Mammary epithelial cell (primary cell): ENCODE measurements at regions of chr17 and their contacts with region 1.

Region 1: GRCh38 chr17:17568749-17569195 is 22.7 kb downstream of the PEMT start:
- DNase-seq: peak; percentile 28
- H3K4me3 ChIP-seq: no peak overlapping the region
- H3K27ac ChIP-seq: no peak overlapping the region
- H3K4me1 ChIP-seq: no peaks in the 10 kb centered on the region
- H3K27me3 ChIP-seq: no peaks in the 10 kb centered on the region
- CTCF ChIP-seq: peak; percentile 75 to 92

Region 2: DNA sequence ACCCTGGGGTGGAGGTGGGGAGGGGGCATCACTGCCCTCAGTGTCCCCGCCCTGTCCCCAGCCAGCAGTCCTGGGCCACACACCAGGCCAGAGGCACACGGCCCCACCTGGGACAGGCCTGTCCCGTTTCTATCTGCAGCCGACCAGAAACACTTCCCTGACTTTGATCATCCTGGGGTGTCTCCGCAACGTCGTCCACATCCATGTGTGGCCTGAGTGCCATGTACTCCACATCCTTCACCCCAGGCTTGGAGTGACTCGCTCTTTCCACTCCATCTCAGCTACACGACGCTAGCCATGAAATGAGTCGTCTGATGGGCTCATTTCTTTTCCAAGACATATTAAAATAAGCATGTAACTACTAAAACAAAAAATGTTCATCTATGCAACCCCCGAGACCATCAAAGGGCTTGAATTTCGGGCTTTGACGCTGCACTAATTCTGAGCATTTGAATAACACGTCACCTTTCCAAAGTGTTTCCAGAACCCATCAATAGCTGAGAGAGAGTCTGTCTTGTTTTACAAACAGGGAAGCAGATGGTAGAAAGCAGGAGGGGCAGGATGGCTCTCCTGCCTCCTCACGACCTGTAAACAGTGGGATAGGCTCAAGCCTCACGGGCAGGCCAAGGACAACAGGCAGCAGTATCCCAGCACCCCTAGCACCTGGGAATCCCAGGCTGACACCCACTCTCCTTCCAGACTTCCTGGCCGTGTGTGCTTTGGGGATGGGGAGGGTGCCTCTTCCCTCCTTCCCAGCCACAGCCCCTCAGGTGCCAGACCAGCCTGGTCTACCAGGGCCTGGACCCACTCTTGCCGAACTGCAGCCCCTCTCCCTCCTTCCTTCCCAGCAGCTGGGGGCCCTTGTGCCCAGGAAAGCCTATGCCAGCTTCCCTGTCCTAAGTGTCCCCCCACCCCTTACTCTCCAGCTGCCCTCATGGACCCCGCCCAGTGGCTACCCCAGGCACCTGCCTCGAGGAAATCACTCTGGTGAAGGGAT is 52.5 kb before region 1 on chr17:
- CTCF ChIA-PET with region 1: no interaction called
- dilution Hi-C with region 1: no loop called
- in situ Hi-C with region 1: no loop called
- intact Hi-C with region 1: no loop called
- DNase-seq: peak; percentile 18
- H3K4me3 ChIP-seq: no peak overlapping the region
- H3K27ac ChIP-seq: no peak overlapping the region
- H3K4me1 ChIP-seq: peaks cover 11% of the 10 kb centered on the region
- H3K27me3 ChIP-seq: peaks cover 10% of the 10 kb centered on the region
- CTCF ChIP-seq: no peak

Region 3: DNA sequence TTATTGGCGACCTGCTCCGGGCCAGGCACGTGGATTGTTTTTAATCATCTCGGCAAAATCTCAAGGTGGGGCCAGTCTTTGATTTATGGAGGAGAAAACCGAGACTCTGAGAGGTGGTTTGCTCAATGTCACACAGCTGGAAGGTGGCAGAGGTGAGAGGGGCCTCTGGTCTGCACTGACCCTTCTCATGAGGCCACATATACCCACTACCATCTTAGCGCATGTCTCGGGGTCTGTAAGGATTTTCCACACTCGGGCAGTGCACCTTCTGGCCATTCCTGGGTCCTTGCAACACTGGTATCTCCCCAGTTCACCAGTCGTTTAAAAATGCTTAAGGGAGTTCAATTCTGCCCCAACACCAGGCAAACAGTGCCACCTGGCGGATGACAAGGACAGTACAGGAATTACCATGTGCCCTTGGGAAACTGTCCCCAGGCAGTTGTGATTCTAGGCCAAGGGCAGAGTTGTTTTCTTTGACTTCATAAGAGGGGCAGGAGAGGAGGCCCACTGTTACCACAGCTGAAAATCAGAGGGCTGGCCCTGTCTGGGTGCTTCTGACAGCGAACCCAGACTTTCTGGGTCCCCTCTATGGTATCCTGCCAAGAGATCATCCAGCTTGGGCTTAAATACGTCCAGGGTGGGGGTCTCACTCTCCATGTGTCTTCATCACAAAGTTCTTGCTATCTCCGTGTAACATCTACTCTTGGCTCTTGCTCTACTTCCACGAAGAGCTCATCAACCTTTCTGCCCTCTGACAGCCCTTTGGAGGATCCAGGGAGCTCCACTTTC is 73.0 kb after region 1 on chr17:
- CTCF ChIA-PET with region 1: no interaction called
- dilution Hi-C with region 1: no loop called
- in situ Hi-C with region 1: no loop called
- intact Hi-C with region 1: loop called (anchors 2 kb)
- DNase-seq: peak; percentile 54
- H3K4me3 ChIP-seq: no peak overlapping the region
- H3K27ac ChIP-seq: no peak overlapping the region
- H3K4me1 ChIP-seq: peaks cover 3% of the 10 kb centered on the region
- H3K27me3 ChIP-seq: no peaks in the 10 kb centered on the region
- CTCF ChIP-seq: peak; percentile 85 to 90